ENCODE measurements at regions of chr9 and their contacts with region 1.

Region 1: DNA sequence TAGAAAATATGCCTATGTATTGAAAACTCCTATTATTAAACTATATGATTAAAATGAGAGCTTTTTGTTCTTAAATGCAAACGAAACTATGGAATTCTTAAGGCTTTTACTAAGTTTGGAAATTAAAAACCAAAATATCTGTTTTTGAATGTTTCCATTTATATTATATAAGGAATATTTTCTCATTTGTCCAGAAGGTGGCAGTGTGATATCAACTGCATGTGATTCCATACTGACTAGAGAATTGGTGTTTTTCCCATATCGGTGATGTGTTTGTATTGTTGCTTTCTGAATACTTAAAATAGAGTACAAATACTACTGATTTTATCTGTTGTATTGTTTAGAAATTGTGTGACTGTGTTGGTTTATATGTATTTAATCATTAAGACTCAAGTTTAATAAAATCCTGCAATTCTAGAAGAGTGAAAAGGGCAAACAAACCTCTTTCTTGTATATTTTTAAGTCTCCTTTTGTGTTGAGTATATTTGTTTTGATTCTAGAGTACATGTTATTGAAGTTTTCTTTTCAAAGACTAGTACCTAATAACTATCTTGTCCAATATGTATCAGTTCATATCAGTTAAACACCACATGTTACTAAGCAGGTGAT is 320.8 kb downstream of the CCDC171 start:
- DNase-seq: peak in 1 of 2 experiments; percentile 11
- H3K4me3 ChIP-seq: no peak overlapping the region
- H3K4me3 Mint-ChIP-seq: no peak overlapping the region
- H3K27ac Mint-ChIP-seq: no peak overlapping the region
- H3K4me1 ChIP-seq: no peaks in the 10 kb centered on the region
- H3K4me1 Mint-ChIP-seq: no peaks in the 10 kb centered on the region
- H3K27me3 ChIP-seq: no peaks in the 10 kb centered on the region
- H3K27me3 Mint-ChIP-seq: no peaks in the 10 kb centered on the region
- CTCF ChIP-seq: peak; percentile 33 to 52

Region 2: DNA sequence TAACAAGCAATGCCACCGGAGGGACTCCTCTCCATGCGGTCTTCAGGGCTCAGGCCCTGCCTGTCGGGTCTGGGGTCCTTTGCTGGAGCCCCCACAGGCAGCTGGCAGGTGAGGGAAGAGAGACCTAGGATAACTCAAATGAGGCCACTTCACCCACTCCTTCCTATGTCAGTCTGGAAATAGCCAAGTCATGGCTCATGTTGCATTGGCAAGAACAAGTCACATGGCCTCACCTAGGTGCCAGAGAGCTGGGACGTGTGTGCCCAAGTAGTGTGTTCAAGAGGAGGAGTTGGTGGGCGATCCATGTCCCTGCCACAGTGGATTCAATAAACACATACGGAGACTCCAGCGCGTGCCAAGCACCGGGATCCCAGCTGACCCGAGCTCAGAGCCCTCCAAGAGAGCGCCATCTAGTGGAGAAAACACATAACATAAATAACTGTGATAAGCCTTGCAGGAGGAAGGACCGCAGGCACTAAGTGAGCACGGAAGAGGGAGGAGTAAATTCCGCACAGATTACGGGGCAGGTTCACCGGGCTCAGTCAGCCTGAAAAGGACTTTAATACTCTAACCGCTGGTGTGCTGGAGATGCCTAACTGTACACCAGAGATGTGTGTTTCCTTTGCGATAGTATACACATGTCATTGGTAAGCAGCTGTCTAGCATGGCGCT is 260.0 kb after region 1 on chr9:
- CTCF ChIA-PET with region 1: no interaction called
- POLR2A ChIA-PET with region 1: no interaction called
- intact Hi-C with region 1: loop called (anchors 10 kb)
- DNase-seq: no peak
- H3K4me3 ChIP-seq: no peak overlapping the region
- H3K4me3 Mint-ChIP-seq: no peak overlapping the region
- H3K27ac Mint-ChIP-seq: no peak overlapping the region
- H3K4me1 ChIP-seq: no peaks in the 10 kb centered on the region
- H3K4me1 Mint-ChIP-seq: no peaks in the 10 kb centered on the region
- H3K27me3 ChIP-seq: no peaks in the 10 kb centered on the region
- H3K27me3 Mint-ChIP-seq: no peaks in the 10 kb centered on the region
- CTCF ChIP-seq: peak in 1 of 2 experiments; percentile 30

Measured in Caco-2 (cell line).